Gastrocnemius medialis (tissue), 4 donors: ENCODE measurements at regions of chr9 and their contacts with region 1.

Region 1: GRCh38 chr9:127144670-127145445 is 22.4 kb upstream of the ANGPTL2 start:
- DNase-seq: peak; percentile 84 to 93
- ATAC-seq: peak; percentile 96 to 97
- H3K4me3 ChIP-seq: no peak overlapping the region
- H3K27ac ChIP-seq: peak overlapping the region; percentile 81 to 89 (median 87)
- H3K4me1 ChIP-seq: peaks cover 23 to 38% of the 10 kb centered on the region in 2 donors
- H3K27me3 ChIP-seq: no peaks in the 10 kb centered on the region
- CTCF ChIP-seq: peak; percentile 35 to 50 (median 42)
- POLR2A ChIP-seq: no peak

Region 2: GRCh38 chr9:126636983-126637798 is 507.7 kb before region 1 on chr9:
- in situ Hi-C with region 1: no loop called
- intact Hi-C with region 1: no loop called
- DNase-seq: no peak
- ATAC-seq: no peak
- H3K4me3 ChIP-seq: no peak overlapping the region
- H3K27ac ChIP-seq: no peak overlapping the region
- H3K4me1 ChIP-seq: no peaks in the 10 kb centered on the region
- H3K27me3 ChIP-seq: peaks cover 26 to 40% (median 30%) of the 10 kb centered on the region in 3 donors
- CTCF ChIP-seq: no peak
- POLR2A ChIP-seq: no peak

Region 3: GRCh38 chr9:126965541-126966428 is 179.1 kb before region 1 on chr9:
- in situ Hi-C with region 1: no loop called
- intact Hi-C with region 1: loop called (anchors 1 kb)
- DNase-seq: peak; percentile 24 to 66
- ATAC-seq: peak; percentile 80 to 93
- H3K4me3 ChIP-seq: no peak overlapping the region
- H3K27ac ChIP-seq: peak overlapping the region in 2 of 4 donors; percentile 16 to 29
- H3K4me1 ChIP-seq: peaks cover 19 to 41% of the 10 kb centered on the region in 2 donors
- H3K27me3 ChIP-seq: no peaks in the 10 kb centered on the region
- CTCF ChIP-seq: peak; percentile 71 to 84 (median 80)
- POLR2A ChIP-seq: no peak

Region 4: DNA sequence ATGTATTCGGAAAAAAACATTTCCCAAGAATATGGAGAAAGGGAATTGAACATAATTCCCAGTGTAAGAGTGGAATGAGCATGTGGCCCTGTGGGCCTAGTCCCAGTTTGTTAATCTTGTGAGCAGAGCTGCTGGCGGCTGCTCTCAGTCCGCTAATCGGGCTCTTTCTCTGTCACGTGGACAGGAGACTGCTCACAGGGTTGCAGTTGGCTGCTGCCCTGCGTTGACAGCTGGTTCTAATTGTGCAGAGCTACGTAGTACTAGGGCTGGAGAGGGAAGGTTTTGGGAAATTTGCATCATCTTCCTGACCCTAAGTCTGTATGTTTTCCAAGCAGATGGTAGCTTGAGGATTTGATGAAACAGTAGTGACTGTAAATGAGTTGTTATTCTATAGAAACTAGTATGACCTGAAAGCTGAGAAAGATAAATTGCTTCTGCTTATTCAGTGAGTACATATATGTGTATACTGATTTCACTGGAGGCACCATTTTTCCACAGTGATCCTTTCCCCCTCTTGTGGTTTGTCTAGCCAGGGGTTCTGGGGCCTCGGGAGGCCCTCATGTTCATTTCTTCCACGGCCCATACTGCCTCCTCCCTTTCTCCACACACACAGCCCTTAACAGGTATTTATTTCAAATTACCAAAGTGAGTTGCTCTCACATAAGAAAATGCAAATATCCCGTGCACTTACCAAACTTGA is 123.0 kb before region 1 on chr9:
- in situ Hi-C with region 1: no loop called
- intact Hi-C with region 1: no loop called
- DNase-seq: peak; percentile 92 to 94
- ATAC-seq: peak; percentile 94 to 98
- H3K4me3 ChIP-seq: no peak overlapping the region
- H3K27ac ChIP-seq: peak overlapping the region; percentile 74 to 81 (median 79)
- H3K4me1 ChIP-seq: peaks cover 26 to 41% of the 10 kb centered on the region in 2 donors
- H3K27me3 ChIP-seq: no peaks in the 10 kb centered on the region
- CTCF ChIP-seq: no peak
- POLR2A ChIP-seq: no peak

Region 5: DNA sequence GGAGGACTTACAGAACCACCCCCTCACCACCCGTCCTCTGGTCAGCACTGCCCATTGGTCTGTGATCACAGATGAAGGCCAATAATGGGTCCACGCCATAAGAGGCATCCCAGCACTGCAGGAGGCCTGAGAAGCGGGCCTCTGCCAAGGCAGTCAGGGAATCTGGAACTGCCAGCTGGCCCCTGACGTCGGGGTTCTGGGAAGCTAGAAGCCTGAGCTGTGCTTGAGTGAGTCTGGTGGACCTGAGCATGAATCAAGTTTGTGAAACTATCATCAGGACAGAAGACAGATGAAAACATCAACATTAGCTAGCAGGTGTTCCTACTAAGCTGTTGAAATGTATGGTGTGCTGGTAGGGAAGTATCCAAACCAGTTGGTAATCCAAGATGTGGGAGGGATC is 30.3 kb before region 1 on chr9:
- in situ Hi-C with region 1: no loop called
- intact Hi-C with region 1: loop called (anchors 1 kb)
- DNase-seq: peak; percentile 66 to 83
- ATAC-seq: peak; percentile 61 to 73
- H3K4me3 ChIP-seq: no peak overlapping the region
- H3K27ac ChIP-seq: peak overlapping the region; percentile 81 to 95 (median 92)
- H3K4me1 ChIP-seq: peaks cover 69 to 71% of the 10 kb centered on the region in 2 donors
- H3K27me3 ChIP-seq: no peaks in the 10 kb centered on the region
- CTCF ChIP-seq: no peak
- POLR2A ChIP-seq: peak in 1 of 2 donors; percentile 32